Activated CD8-positive, alpha-beta T cell treated with anti-CD3 and anti-CD28 coated beads, Interleukin-2, amount 10 ng/mL, durations not matched to agents 7 days and 5 days (primary cell): ENCODE measurements at regions of chr9 and their contacts with region 1.

Region 1: GRCh38 chr9:93058355-93059096 is at the start of gene SUSD3:
- DNase-seq: peak; percentile 73
- ATAC-seq: peak; percentile 67
- H3K4me3 Mint-ChIP-seq: peak within 1 kb of the TSS; percentile 90
- H3K27ac Mint-ChIP-seq: peak within 1 kb of the TSS; percentile 82
- H3K4me1 Mint-ChIP-seq: peaks cover 69% of the 10 kb centered on the region
- H3K27me3 Mint-ChIP-seq: no peaks in the 10 kb centered on the region
- total RNA-seq, gene SUSD3: 57.9 to 59.6 TPM

Region 2: GRCh38 chr9:92738661-92739081 is 319.9 kb before region 1 on chr9:
- CTCF ChIA-PET with region 1: no interaction called
- POLR2A ChIA-PET with region 1: no interaction called
- DNase-seq: no peak
- ATAC-seq: no peak
- H3K4me3 Mint-ChIP-seq: no peak overlapping the region
- H3K27ac Mint-ChIP-seq: peak overlapping the region; percentile 66
- H3K4me1 Mint-ChIP-seq: peaks cover 43% of the 10 kb centered on the region
- H3K27me3 Mint-ChIP-seq: no peaks in the 10 kb centered on the region

Region 3: DNA sequence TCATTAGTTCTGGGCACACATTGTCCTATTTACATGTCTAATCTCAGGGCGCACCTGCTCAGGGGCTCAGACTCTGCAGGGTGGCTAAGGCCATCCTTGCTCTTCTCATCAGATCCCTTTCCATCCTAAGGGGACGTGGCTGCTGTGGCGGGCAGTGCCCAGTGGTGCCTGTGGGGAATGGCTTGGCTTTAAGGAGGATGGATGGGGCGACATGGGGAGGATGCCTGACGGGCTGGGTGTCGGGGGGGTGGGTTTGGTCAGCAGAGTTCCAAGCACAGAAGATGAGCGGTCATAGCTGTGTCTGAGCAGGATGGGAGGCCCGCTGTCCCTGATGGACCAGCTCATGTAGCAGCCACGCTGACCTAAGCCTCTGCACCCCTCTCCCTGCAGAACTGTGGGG is 40.9 kb before region 1 on chr9:
- CTCF ChIA-PET with region 1: no interaction called
- POLR2A ChIA-PET with region 1: no interaction called
- DNase-seq: no peak
- ATAC-seq: no peak
- H3K4me3 Mint-ChIP-seq: no peak overlapping the region
- H3K27ac Mint-ChIP-seq: peak overlapping the region; percentile 40
- H3K4me1 Mint-ChIP-seq: peaks cover 46% of the 10 kb centered on the region
- H3K27me3 Mint-ChIP-seq: no peaks in the 10 kb centered on the region

Region 4: DNA sequence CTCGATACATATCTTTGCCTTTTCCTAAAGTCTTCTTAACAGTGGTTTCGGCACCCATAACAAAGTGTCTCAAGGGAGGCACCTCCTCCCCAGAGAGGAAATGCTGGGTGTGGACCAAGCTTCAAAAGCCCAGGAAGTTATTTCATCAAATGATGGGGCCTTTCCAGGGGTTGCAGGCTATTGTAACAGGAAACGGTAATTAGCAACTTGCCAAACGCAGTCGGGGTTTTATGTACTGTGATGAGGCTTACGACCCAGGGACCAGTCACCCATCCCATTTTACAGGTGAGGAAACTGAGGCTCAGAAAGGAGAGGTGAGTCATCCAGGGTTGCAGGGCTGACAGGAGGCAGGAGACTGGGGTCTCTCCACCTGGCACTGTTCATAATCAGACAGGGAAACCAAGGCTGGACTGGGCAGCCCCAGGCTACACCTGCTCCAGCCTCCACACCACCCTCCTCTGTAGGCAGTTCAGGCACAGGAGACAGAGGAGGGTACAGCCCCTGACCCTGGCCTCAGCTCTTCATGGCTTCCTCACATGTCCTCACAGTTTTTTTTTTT is 30.0 kb before region 1 on chr9:
- CTCF ChIA-PET with region 1: interaction called, 7 read pairs
- POLR2A ChIA-PET with region 1: interaction called, 23 read pairs
- DNase-seq: peak; percentile 83
- ATAC-seq: peak; percentile 85
- H3K4me3 Mint-ChIP-seq: peak overlapping the region; percentile 71
- H3K27ac Mint-ChIP-seq: peak overlapping the region; percentile 92
- H3K4me1 Mint-ChIP-seq: peaks cover 79% of the 10 kb centered on the region
- H3K27me3 Mint-ChIP-seq: no peaks in the 10 kb centered on the region

Region 5: DNA sequence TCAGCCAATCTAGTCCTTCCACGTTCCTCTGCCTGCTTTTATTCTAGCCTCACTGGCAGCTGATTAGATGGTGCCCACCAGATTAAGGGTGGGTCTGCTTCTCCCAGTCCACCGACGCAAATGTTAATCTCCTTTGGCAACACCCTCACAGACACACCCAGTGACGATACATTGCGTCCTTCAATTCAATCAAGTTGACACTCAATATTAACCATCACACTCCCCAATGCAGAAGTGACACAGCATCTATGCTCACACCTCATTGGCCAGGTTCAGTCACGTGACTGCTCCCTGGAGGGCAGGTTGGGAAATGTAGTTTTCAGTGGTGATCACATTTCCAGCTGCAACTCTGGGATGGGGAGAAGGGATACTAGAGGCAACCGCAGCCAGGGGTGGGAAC is 12.9 kb after region 1 on chr9:
- CTCF ChIA-PET with region 1: no interaction called
- POLR2A ChIA-PET with region 1: no interaction called
- DNase-seq: no peak
- ATAC-seq: no peak
- H3K4me3 Mint-ChIP-seq: no peak overlapping the region
- H3K27ac Mint-ChIP-seq: no peak overlapping the region
- H3K4me1 Mint-ChIP-seq: peaks cover 35% of the 10 kb centered on the region
- H3K27me3 Mint-ChIP-seq: no peaks in the 10 kb centered on the region

Region 6: GRCh38 chr9:93095205-93096130 is 36.9 kb after region 1 on chr9:
- CTCF ChIA-PET with region 1: interaction called, 4 read pairs
- POLR2A ChIA-PET with region 1: interaction called, 31 read pairs
- DNase-seq: peak; percentile 100
- ATAC-seq: peak; percentile 84
- H3K4me3 Mint-ChIP-seq: peak overlapping the region; percentile 74
- H3K27ac Mint-ChIP-seq: peak overlapping the region; percentile 98
- H3K4me1 Mint-ChIP-seq: peaks cover 79% of the 10 kb centered on the region
- H3K27me3 Mint-ChIP-seq: no peaks in the 10 kb centered on the region

Region 7: DNA sequence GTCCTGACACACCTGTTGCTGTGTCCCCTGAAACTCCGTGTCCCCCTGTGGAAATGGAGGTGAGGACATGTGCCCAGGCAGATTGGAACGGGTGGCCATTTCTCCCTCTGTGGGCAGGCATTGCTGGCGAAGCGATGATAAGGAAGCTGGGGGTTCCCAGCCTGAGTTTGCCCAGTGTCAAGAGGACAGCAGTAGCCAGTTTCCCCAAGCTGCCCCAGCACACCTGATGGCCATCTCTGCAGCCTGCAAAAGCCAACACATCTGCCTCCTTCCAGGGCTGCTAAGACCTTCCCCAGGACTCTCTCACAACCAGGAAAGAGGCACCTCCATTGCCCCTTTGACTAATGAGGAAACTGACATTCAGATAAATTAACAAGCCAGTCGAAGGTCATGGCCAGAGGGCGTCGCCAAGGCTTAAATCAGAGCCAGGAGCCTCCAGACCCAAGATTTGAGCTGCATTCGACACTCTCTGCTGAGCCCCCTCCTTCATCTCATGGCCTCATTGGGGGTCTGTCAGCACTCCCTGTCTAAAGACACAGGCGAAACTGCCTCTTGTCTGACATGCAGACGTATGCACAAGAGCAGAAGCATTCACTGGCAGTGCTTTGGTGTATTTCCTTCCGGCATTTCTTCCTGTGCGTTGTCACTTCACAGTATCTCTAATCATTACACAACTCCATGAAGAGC is 115.0 kb after region 1 on chr9:
- CTCF ChIA-PET with region 1: no interaction called
- POLR2A ChIA-PET with region 1: no interaction called
- DNase-seq: no peak
- ATAC-seq: no peak
- H3K4me3 Mint-ChIP-seq: no peak overlapping the region
- H3K27ac Mint-ChIP-seq: no peak overlapping the region
- H3K4me1 Mint-ChIP-seq: no peaks in the 10 kb centered on the region
- H3K27me3 Mint-ChIP-seq: no peaks in the 10 kb centered on the region